Vagina (tissue), 2 donors: ENCODE measurements at regions of chr3 and their contacts with region 1.

Region 1: GRCh38 chr3:185837414-185837813 is 12.6 kb upstream of the IGF2BP2 start:
- DNase-seq: no peak
- H3K4me3 ChIP-seq: no peak overlapping the region
- H3K27ac ChIP-seq: no peak overlapping the region
- H3K4me1 ChIP-seq: no peaks in the 10 kb centered on the region
- H3K27me3 ChIP-seq: no peaks in the 10 kb centered on the region
- CTCF ChIP-seq: no peak
- POLR2A ChIP-seq: no peak

Region 2: DNA sequence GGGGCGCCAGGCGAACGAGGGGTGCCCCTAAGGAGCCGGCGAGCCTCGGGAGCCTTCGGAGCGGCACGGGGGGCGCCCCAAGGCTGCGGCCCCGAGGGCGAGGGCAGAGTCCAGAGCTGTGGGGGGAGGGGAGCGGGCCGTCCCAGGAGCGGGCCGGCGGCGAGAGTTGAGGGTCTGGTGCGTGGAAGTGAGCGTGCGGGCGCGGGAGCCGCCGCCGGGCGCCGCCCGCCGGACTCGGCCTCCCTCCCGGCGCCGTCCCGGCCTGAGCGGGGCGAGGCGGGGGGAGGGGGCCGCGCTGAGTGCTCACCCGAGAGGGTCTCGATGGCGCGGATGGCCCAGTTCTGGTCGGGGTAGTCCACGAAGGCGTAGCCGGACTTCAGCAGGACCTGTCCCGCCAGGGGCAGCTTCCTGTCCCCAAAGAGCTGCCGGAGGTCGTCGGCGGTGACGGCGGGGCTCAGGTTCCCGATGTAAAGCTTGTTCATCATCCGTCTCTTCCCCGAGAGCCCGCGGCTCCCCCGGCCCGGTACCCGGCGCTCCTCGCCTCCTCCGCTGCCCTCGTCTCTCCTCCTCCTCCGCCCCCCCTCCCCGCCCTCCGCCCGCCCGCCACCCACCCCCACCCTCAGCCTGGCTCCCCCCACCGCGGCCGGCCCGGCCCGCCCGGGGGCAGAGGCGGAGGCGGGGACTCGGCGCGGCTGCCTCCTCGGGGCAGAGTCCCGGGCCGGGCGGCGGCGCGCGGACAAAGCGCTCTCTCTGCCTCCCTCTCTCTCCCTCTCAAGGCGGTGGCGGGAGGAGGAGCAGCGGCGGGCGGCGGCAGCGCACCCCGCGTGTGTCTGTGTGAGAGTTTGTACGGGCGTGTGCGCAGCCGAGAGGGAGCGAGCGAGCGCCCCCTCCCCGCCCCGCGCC is 12.7 kb before region 1 on chr3 and contains the start of gene IGF2BP2:
- intact Hi-C with region 1: no loop called
- DNase-seq: no peak
- H3K4me3 ChIP-seq: peak within 1 kb of the TSS; percentile 77 to 86
- H3K27ac ChIP-seq: peak within 1 kb of the TSS; percentile 98
- H3K4me1 ChIP-seq: peaks cover 24% of the 10 kb centered on the region
- H3K27me3 ChIP-seq: no peaks in the 10 kb centered on the region
- CTCF ChIP-seq: no peak
- POLR2A ChIP-seq: peak in 1 of 2 donors; percentile 49
- total RNA-seq, gene IGF2BP2: 9.8 TPM

Region 3: DNA sequence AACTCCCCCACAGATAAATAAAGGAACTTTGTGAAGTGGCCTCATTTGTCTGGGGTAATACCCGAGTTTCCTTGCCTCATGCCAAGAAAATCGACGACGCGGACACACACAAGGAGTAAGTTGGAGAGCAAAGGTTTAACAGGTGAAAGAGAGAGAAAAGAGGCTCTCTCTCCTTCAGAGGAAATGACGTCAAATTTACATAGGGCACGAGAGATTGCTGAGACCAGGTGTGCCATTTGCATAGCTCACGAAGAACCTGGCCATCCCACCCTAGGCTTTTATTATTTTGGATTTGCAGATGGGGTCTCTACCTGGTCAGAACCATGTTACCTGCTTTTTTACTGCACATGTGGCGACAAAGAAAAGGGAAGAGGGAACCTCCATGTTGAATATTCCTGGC is 36.7 kb after region 1 on chr3:
- intact Hi-C with region 1: no loop called
- DNase-seq: no peak
- H3K4me3 ChIP-seq: no peak overlapping the region
- H3K27ac ChIP-seq: no peak overlapping the region
- H3K4me1 ChIP-seq: no peaks in the 10 kb centered on the region
- H3K27me3 ChIP-seq: no peaks in the 10 kb centered on the region
- CTCF ChIP-seq: no peak
- POLR2A ChIP-seq: no peak

Region 4: DNA sequence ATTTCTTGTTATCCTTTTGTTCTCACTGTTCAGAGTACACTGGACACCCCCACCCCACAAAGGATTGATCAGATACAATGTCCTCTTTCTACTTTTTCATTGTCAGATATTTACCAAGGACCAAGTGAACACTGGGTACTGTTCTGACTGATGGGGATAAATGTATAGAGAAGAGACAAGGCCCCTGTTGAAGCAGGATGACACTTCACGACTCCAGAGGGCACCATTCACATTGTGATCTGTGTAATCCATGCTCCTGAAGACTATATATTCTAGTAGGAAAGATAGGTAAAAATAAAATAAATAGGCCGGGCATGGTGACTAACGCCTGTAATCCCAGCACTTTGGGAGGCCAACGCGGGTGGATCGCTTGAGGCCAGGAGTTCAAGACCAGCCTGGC is 714.0 kb after region 1 on chr3:
- intact Hi-C with region 1: loop called (anchors 10 kb)
- DNase-seq: no peak
- H3K4me3 ChIP-seq: no peak overlapping the region
- H3K27ac ChIP-seq: no peak overlapping the region
- H3K4me1 ChIP-seq: no peaks in the 10 kb centered on the region
- H3K27me3 ChIP-seq: no peaks in the 10 kb centered on the region
- CTCF ChIP-seq: no peak
- POLR2A ChIP-seq: no peak